Activated naive CD4-positive, alpha-beta T cell treated with anti-CD3 and anti-CD28 coated beads, Interleukin-2, amount 10 ng/mL, durations not matched to agents 7 days and 5 days (primary cell): ENCODE measurements at regions of chr7 and their contacts with region 1.

Region 1: GRCh38 chr7:134690016-134690415 is 43.4 kb downstream of the BPGM start:
- DNase-seq: no peak
- H3K4me3 Mint-ChIP-seq: no peak overlapping the region
- H3K27ac Mint-ChIP-seq: no peak overlapping the region
- H3K4me1 Mint-ChIP-seq: peaks cover 30% of the 10 kb centered on the region
- H3K27me3 Mint-ChIP-seq: peaks cover 5% of the 10 kb centered on the region

Region 2: DNA sequence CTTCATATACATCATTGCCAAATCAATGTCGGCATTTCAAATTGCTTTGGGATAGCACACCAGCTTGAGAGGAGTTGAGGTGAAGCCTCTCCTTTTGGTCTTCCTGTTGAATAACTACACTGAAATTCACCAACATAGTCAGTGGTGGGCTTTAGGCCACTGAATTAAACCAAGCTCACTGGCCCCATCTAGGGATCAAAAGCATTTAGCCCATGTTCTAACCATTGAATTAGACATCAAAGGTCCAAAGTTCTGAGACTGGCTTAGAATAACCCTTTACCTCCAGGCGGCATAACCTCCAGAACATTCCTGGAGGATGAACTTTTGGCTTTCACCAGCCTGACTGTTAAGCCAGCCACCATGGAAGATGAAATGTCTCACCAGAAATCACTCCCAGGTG is 11.3 kb after region 1 on chr7:
- CTCF ChIA-PET with region 1: interaction called, 15 read pairs
- DNase-seq: no peak
- H3K4me3 Mint-ChIP-seq: no peak overlapping the region
- H3K27ac Mint-ChIP-seq: no peak overlapping the region
- H3K4me1 Mint-ChIP-seq: no peaks in the 10 kb centered on the region
- H3K27me3 Mint-ChIP-seq: peaks cover 7% of the 10 kb centered on the region

Region 3: GRCh38 chr7:134714470-134715205 is 24.6 kb after region 1 on chr7:
- CTCF ChIA-PET with region 1: no interaction called
- DNase-seq: no peak
- H3K4me3 Mint-ChIP-seq: no peak overlapping the region
- H3K27ac Mint-ChIP-seq: no peak overlapping the region
- H3K4me1 Mint-ChIP-seq: peaks cover 26% of the 10 kb centered on the region
- H3K27me3 Mint-ChIP-seq: no peaks in the 10 kb centered on the region

Region 4: DNA sequence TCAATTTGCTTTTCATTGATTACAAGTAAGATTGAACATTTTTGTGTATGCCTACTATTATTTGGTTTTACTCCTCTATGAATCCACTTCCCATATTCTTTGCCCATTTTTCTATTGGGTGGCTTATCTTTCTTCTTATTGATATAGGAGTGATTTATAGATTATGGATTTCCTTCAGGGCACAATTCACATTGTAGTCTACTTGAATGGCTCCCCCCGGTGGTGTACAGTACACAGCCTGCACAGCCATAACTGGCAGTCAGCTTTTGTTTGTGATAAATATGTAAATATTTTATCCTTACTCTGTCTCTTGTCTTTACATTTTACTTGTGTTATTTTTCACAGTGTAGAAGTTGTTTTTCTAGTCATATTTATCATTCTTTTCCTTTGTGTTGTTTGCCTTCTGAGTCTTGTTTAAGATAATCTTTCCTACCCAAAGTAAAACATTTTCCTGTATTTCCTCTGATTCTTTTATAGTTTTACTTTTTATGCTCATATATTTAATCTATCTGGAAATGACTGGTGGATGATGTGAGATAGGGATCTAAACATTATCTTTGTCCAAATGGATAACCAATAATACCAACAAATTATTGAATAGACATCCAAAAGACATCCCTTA is 65.5 kb after region 1 on chr7:
- CTCF ChIA-PET with region 1: interaction called, 21 read pairs
- DNase-seq: peak; percentile 66
- H3K4me3 Mint-ChIP-seq: no peak overlapping the region
- H3K27ac Mint-ChIP-seq: no peak overlapping the region
- H3K4me1 Mint-ChIP-seq: peaks cover 3% of the 10 kb centered on the region
- H3K27me3 Mint-ChIP-seq: no peaks in the 10 kb centered on the region

Region 5: DNA sequence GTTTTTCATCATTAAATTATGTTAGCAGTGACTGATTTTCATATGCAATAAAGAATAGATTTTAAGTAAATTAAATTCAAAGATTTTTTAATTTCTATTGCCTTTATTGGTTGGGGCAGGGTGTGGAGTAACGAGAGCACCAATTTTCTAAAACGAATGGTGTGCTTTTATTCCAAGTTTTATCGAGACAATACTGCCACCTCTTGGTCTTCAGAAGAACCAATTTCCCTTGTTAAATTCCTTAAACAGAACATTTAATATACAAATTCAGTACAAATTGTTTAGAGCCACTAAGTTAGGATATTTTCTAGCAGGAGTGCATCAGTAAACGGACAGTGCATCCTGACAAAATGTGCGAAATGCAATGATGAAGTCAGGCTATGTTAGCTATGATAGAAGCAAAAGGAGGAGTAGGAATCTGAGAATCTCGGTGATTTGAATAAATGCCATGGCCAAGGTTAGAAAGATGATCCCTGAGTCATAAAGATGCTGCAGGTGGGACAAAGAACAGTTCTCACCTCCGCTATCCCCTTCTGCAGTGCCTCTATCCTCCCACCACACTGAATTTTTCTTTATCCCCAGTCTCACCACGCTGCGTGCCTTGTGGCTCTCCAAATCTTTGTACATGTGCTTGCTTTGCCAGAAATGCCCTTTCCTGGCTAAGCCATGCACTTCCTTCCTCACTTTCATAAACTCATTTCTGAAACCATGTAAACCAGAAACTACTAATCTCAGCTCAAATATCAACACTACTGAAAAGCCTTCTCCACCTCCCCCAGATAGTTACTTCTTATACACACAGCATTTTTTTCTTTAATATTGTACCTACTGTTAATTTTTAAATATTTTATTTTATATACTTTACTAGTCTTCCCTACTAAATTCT is 264.4 kb after region 1 on chr7:
- CTCF ChIA-PET with region 1: interaction called, 16 read pairs
- DNase-seq: no peak
- H3K4me3 Mint-ChIP-seq: no peak overlapping the region
- H3K27ac Mint-ChIP-seq: no peak overlapping the region
- H3K4me1 Mint-ChIP-seq: peaks cover 2% of the 10 kb centered on the region
- H3K27me3 Mint-ChIP-seq: no peaks in the 10 kb centered on the region

Region 6: GRCh38 chr7:135023622-135024021 is 333.6 kb after region 1 on chr7:
- CTCF ChIA-PET with region 1: no interaction called
- DNase-seq: no peak
- H3K4me3 Mint-ChIP-seq: no peak overlapping the region
- H3K27ac Mint-ChIP-seq: no peak overlapping the region
- H3K4me1 Mint-ChIP-seq: no peaks in the 10 kb centered on the region
- H3K27me3 Mint-ChIP-seq: no peaks in the 10 kb centered on the region